A549 (cell line): ENCODE measurements at regions of chr2 and their contacts with region 1.

Region 1: DNA sequence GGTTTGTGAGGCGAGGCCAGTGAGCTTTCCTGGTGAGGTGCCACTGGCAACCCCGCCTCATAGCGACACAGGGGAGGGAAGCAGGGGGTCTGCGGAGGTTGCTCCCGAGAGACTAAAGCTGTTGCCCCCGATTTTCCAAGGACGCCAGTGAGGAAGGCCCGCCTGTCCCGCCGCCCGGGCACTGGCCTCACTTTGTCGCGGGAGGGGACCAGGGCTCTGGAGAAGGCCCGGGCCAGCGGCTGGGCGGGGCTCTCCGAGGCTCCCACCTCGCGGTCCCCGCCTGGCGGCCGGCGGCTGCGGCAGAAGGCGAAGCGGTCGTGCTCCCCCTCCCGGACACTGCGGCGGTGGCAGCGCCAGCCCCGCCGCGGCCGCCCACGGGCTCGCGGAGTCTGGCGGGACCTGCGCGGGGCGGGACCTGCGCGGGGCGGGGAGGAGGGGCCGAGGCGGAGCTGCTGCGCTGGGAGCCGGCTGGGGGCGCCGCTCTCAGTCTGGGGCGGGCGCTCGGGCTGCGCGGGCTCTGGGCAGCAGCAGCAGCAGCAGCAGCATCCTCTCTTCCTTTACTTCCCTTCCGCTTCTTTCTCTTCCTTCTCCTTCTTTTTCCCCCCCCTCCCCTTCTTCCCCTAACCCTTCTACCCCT is at the start of gene MAP2:
- DNase-seq: peak; percentile 55 to 77
- ATAC-seq: peak; percentile 95 to 98
- H3K4me3 ChIP-seq: peak within 1 kb of the TSS; percentile 71
- H3K27ac ChIP-seq: peak within 1 kb of the TSS; percentile 68 to 85; a peak in 5 of 6 replicates
- H3K4me1 ChIP-seq: peaks cover 21% of the 10 kb centered on the region; the same call in 2 of the 3 replicates
- CTCF ChIP-seq: peak; percentile 98
- EP300 ChIP-seq: no peak
- POLR2A ChIP-seq: no peak; the same call in 1 of the 2 replicates
- RAD21 ChIP-seq: peak; percentile 46 to 90; a peak in 4 of 5 replicates
- polyA plus RNA-seq, gene MAP2: 1.8 and 2.2 TPM in 2 replicates

Region 2: GRCh38 chr2:209358992-209359391 is 64.7 kb before region 1 on chr2:
- CTCF ChIA-PET with region 1: interaction called, 12 read pairs
- POLR2A ChIA-PET with region 1: no interaction called
- DNase-seq: no peak
- ATAC-seq: no peak
- H3K4me3 ChIP-seq: no peak overlapping the region
- H3K27ac ChIP-seq: no peak overlapping the region
- H3K4me1 ChIP-seq: no peaks in the 10 kb centered on the region
- CTCF ChIP-seq: no peak
- EP300 ChIP-seq: no peak
- POLR2A ChIP-seq: no peak
- RAD21 ChIP-seq: no peak

Region 3: DNA sequence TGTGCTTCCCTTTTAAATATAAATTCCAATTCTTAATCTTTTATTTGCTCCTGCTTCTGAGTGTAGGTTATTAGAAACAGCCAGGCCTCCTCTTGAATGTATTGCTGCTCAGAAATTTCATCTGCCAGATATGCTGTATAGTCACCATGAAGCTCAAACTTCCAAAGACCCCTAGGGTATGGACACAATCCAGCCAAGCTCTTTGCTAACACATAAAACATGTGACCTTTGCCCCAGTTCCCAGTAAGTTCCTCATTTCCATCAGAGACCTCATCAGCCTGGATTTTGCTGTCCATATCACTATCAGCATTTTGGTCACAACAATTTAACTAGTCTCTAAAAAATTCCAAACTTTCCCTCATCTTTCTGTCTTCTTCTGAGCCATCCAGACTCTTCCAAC is 75.4 kb after region 1 on chr2:
- CTCF ChIA-PET with region 1: interaction called, 15 read pairs
- POLR2A ChIA-PET with region 1: no interaction called
- DNase-seq: peak in 1 of 2 experiments; percentile 27
- ATAC-seq: no peak
- H3K4me3 ChIP-seq: no peak overlapping the region
- H3K27ac ChIP-seq: peak overlapping the region; percentile 60 to 67; a peak in 5 of 6 replicates
- H3K4me1 ChIP-seq: peaks cover 36% of the 10 kb centered on the region
- CTCF ChIP-seq: no peak
- EP300 ChIP-seq: no peak
- POLR2A ChIP-seq: no peak
- RAD21 ChIP-seq: no peak

Region 4: GRCh38 chr2:209563453-209563852 is 139.8 kb after region 1 on chr2:
- CTCF ChIA-PET with region 1: interaction called, 10 read pairs
- POLR2A ChIA-PET with region 1: interaction called, 3 read pairs
- DNase-seq: no peak
- ATAC-seq: no peak
- H3K4me3 ChIP-seq: no peak overlapping the region
- H3K27ac ChIP-seq: no peak overlapping the region
- H3K4me1 ChIP-seq: no peaks in the 10 kb centered on the region
- CTCF ChIP-seq: no peak
- EP300 ChIP-seq: no peak
- POLR2A ChIP-seq: no peak
- RAD21 ChIP-seq: no peak

Region 5: DNA sequence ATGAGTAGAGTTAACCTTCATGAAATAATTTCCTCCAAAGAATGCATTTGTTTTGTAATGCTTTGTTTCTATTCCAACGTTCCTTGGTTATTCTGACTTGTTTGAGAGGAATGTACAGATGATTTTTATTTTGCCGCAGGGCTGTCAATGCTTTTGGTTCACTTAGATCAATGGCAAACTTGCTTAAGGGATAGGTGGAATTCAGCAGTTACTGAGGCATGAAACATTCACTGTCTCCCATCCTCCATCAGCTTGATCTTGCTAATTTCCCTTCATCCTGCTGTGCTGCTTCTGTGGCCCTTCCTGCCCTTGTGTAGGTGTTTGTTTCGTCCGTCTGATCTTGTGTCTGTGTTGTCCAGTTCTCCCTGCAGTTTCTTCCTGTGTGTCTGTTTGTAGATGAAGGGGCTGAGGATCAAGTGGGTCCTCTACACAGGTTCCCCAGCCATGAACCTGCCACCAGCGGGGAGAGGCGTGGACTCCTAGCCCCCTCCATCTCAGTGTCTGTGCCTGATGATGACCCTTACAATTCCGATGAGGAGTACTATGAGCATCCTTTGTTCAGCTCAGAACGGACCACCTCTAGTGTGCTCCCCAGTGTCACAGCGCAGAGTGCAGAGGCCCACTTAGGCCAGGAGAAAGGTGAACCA is 263.8 kb after region 1 on chr2:
- CTCF ChIA-PET with region 1: no interaction called
- POLR2A ChIA-PET with region 1: no interaction called
- DNase-seq: no peak
- ATAC-seq: no peak
- H3K4me3 ChIP-seq: no peak overlapping the region
- H3K27ac ChIP-seq: no peak overlapping the region
- H3K4me1 ChIP-seq: no peaks in the 10 kb centered on the region
- CTCF ChIP-seq: no peak
- EP300 ChIP-seq: no peak
- POLR2A ChIP-seq: no peak
- RAD21 ChIP-seq: no peak